Activated T-helper 2 cell treated with anti-CD3 and anti-CD28 coated beads, Interferon-gamma antibody, Interleukin-2, Interleukin-4, amounts not matched to agents 10 μg/mL and 5 μg/mL and 100 μg/mL, durations not matched to agents 14 hours and 24 hours and 36 hours (primary cell): ENCODE measurements at regions of chr9 and their contacts with region 1.

Region 1: GRCh38 chr9:21789541-21790037 is 12.8 kb upstream of the MTAP start:
- DNase-seq: peak; percentile 30
- H3K4me3 Mint-ChIP-seq: peak overlapping the region; percentile 69
- H3K27ac Mint-ChIP-seq: no peak overlapping the region
- H3K4me1 Mint-ChIP-seq: peaks cover 5% of the 10 kb centered on the region
- H3K27me3 Mint-ChIP-seq: peaks cover 39% of the 10 kb centered on the region

Region 2: GRCh38 chr9:21239911-21240310 is 549.7 kb before region 1 on chr9 and contains the start of gene IFNA14:
- intact Hi-C with region 1: loop called (anchors 10 kb)
- DNase-seq: no peak
- H3K4me3 Mint-ChIP-seq: no peak within 1 kb of the TSS
- H3K27ac Mint-ChIP-seq: no peak within 1 kb of the TSS
- H3K4me1 Mint-ChIP-seq: peaks cover 6% of the 10 kb centered on the region
- H3K27me3 Mint-ChIP-seq: peaks cover 38% of the 10 kb centered on the region
- total RNA-seq, gene IFNA14: not detected in 2 replicates

Region 3: GRCh38 chr9:21317956-21318923 is 471.3 kb before region 1 on chr9:
- intact Hi-C with region 1: loop called (anchors 1 kb)
- DNase-seq: no peak
- H3K4me3 Mint-ChIP-seq: no peak overlapping the region
- H3K27ac Mint-ChIP-seq: no peak overlapping the region
- H3K4me1 Mint-ChIP-seq: peaks cover 4% of the 10 kb centered on the region
- H3K27me3 Mint-ChIP-seq: peaks cover 11% of the 10 kb centered on the region

Region 4: DNA sequence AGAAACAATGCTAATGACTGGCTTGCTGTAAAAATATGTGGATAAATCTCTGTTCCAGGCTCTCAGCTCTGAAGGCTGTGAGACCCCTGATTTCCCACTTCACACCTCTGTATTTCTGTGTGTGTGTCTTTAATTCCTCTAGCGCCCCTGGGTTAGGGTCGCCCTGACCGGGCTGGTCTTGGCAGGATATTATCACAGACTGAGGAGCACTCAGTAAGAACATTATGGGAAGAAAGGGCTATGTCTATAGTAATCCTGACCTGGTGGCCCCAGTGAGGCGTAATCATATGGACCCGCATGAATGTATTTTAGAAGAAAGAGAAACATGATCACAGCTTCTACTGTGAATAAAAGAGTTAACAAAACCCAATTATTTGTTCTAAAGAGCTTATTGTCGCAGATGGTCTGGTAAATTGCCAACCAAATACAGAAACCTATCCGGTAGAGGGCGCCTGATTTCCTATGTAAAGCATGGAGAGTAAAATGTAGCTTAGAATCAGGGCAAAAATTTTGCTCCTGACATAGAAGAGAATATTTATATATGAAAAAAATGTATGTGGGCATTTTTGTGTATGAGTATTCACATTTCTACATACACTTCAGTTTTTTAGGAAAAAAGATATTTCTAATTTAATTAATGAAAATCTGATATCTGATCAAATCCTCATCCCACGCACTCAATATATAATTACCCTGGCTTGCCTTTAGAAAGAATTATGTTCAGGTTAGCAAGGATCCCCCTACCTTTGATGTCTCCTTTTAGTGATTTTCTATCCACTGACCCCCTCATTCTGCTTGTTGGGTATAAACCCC is 355.2 kb before region 1 on chr9:
- intact Hi-C with region 1: loop called (anchors 1 kb)
- DNase-seq: no peak
- H3K4me3 Mint-ChIP-seq: no peak overlapping the region
- H3K27ac Mint-ChIP-seq: no peak overlapping the region
- H3K4me1 Mint-ChIP-seq: peaks cover 2% of the 10 kb centered on the region
- H3K27me3 Mint-ChIP-seq: peaks cover 49% of the 10 kb centered on the region

Region 5: GRCh38 chr9:21465859-21466518 is 323.6 kb before region 1 on chr9:
- intact Hi-C with region 1: loop called (anchors 1 kb)
- DNase-seq: no peak
- H3K4me3 Mint-ChIP-seq: no peak overlapping the region
- H3K27ac Mint-ChIP-seq: no peak overlapping the region
- H3K4me1 Mint-ChIP-seq: no peaks in the 10 kb centered on the region
- H3K27me3 Mint-ChIP-seq: peaks cover 18% of the 10 kb centered on the region

Region 6: GRCh38 chr9:21709464-21710058 is 80.0 kb before region 1 on chr9:
- intact Hi-C with region 1: loop called (anchors 1 kb)
- DNase-seq: peak; percentile 41
- H3K4me3 Mint-ChIP-seq: no peak overlapping the region
- H3K27ac Mint-ChIP-seq: no peak overlapping the region
- H3K4me1 Mint-ChIP-seq: peaks cover 4% of the 10 kb centered on the region
- H3K27me3 Mint-ChIP-seq: peaks cover 24% of the 10 kb centered on the region